Cardiac septum (tissue), 1 donor: ENCODE measurements at regions of chr1 and their contacts with region 1.

Region 1: GRCh38 chr1:44036409-44037139 is 5.3 kb upstream of the SLC6A9 start:
- DNase-seq: no peak

Region 2: GRCh38 chr1:43763497-43763973 is 273.0 kb before region 1 on chr1:
- intact Hi-C with region 1: loop called (anchors 5 kb)
- DNase-seq: no peak

Region 3: DNA sequence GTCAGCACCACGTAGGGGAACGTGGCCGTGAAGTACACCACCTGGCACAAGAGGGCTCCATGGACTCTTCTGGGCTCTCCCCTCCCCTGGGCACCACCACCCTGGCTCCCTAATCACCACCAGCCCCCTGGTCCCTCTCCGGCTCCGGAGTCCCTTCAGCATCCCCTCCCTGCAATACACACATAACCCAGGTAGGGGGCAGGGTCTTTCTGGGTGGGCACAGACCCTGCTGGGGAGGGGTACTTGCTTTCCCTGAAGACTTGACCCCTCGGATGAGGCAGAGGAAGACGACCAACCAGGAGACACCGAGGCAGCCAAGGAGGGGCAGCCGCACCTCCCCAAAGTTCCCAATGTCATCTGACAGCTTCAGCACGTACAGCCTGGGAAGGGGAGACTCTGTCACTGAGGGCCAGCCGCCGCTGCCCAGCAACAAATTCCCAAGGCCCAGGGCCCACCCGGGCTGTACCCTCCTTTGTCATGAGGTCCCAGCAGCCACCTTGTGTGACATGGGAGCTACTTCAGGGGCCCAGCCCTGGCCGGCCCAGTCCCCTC is 33.9 kb before region 1 on chr1:
- intact Hi-C with region 1: loop called (anchors 1 kb)
- DNase-seq: no peak